ENCODE measurements at regions of chr15 and their contacts with region 1.

Region 1: GRCh38 chr15:64841258-64842095 is at the start of gene PLEKHO2:
- DNase-seq: peak; percentile 75 to 94
- ATAC-seq: peak; percentile 62 to 82 (median 77)
- H3K4me3 ChIP-seq: peak within 1 kb of the TSS; percentile 73
- H3K4me3 Mint-ChIP-seq: peak within 1 kb of the TSS; percentile 83
- H3K27ac ChIP-seq: peak within 1 kb of the TSS; percentile 72
- H3K27ac Mint-ChIP-seq: peak within 1 kb of the TSS; percentile 86 to 89
- H3K4me1 ChIP-seq: peaks cover 69% of the 10 kb centered on the region
- H3K4me1 Mint-ChIP-seq: peaks cover 83 to 91% of the 10 kb centered on the region in 2 donors
- H3K27me3 ChIP-seq: no peaks in the 10 kb centered on the region
- H3K27me3 Mint-ChIP-seq: no peaks in the 10 kb centered on the region
- CTCF ChIP-seq: peak; percentile 22
- total RNA-seq, gene PLEKHO2: 35.3 to 53.4 (median 49.8) TPM

Region 2: GRCh38 chr15:64825431-64826294 is 15.8 kb before region 1 on chr15 and contains the start of gene PIF1:
- intact Hi-C with region 1: loop called (anchors 1 kb)
- DNase-seq: peak; percentile 78 to 97
- ATAC-seq: peak; percentile 90 to 99 (median 93)
- H3K4me3 ChIP-seq: peak within 1 kb of the TSS; percentile 30
- H3K4me3 Mint-ChIP-seq: peak within 1 kb of the TSS; percentile 89
- H3K27ac ChIP-seq: peak within 1 kb of the TSS; percentile 37
- H3K27ac Mint-ChIP-seq: peak within 1 kb of the TSS; percentile 70 to 73
- H3K4me1 ChIP-seq: peaks cover 34% of the 10 kb centered on the region
- H3K4me1 Mint-ChIP-seq: peaks cover 33 to 41% of the 10 kb centered on the region in 2 donors
- H3K27me3 ChIP-seq: no peaks in the 10 kb centered on the region
- H3K27me3 Mint-ChIP-seq: no peaks in the 10 kb centered on the region
- CTCF ChIP-seq: no peak
- total RNA-seq, gene PIF1: 6.2 to 23.9 (median 9.7) TPM

Region 3: GRCh38 chr15:64883997-64884511 is 42.6 kb after region 1 on chr15:
- intact Hi-C with region 1: loop called (anchors 2 kb)
- DNase-seq: peak; percentile 78 to 87
- ATAC-seq: peak; percentile 48 to 66 (median 57)
- H3K4me3 ChIP-seq: no peak overlapping the region
- H3K4me3 Mint-ChIP-seq: peak overlapping the region; percentile 86
- H3K27ac ChIP-seq: peak overlapping the region; percentile 63
- H3K27ac Mint-ChIP-seq: peak overlapping the region; percentile 90 to 99
- H3K4me1 ChIP-seq: peaks cover 36% of the 10 kb centered on the region
- H3K4me1 Mint-ChIP-seq: peaks cover 27 to 31% of the 10 kb centered on the region in 2 donors
- H3K27me3 ChIP-seq: no peaks in the 10 kb centered on the region
- H3K27me3 Mint-ChIP-seq: no peaks in the 10 kb centered on the region
- CTCF ChIP-seq: no peak

Region 4: GRCh38 chr15:64893481-64894394 is 52.3 kb after region 1 on chr15:
- intact Hi-C with region 1: loop called (anchors 1 kb)
- DNase-seq: peak; percentile 82 to 95
- ATAC-seq: peak; percentile 61 to 80 (median 72)
- H3K4me3 ChIP-seq: peak overlapping the region; percentile 23
- H3K4me3 Mint-ChIP-seq: peak overlapping the region; percentile 84
- H3K27ac ChIP-seq: peak overlapping the region; percentile 90
- H3K27ac Mint-ChIP-seq: peak overlapping the region; percentile 98 to 99
- H3K4me1 ChIP-seq: peaks cover 73% of the 10 kb centered on the region
- H3K4me1 Mint-ChIP-seq: peaks cover 66 to 72% of the 10 kb centered on the region in 2 donors
- H3K27me3 ChIP-seq: no peaks in the 10 kb centered on the region
- H3K27me3 Mint-ChIP-seq: no peaks in the 10 kb centered on the region
- CTCF ChIP-seq: no peak

Region 5: DNA sequence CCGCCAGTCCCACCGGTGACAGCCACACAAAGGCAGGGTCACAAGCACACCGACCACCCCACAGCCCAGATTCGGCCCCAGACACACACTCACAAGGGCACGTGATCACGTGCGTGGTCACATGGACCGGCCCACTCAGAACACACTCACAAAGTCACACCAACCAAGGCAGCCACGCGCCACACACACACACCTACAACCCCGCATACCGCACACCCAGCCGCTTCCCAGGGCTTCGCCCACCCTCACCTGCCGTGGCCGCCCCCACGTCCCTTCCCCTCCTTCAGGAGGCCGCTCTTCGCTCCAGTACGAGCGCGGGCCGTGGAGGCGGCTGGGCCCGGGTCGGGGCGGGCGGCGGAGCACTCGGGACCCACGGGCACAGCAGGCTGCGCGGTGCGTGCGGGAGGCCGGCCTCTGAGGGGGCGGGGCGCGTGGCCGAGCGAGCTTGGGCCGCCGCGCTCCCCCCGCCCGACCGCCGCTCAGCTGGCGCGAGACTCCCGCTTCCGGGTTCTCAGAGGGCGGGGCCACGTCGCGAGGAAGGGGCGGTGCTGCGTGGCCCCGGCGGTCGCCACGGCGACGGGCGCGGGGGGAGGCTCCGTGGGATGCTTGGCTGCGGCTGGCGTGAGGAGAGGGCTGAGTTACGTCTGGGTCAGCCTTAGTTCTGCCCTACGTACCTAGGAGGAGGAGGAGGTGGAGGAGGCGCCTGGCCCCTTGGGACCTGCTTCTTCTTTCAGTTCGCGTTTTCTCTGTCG is 148.1 kb after region 1 on chr15 and contains the start of gene SPG21:
- intact Hi-C with region 1: loop called (anchors 5 kb)
- DNase-seq: peak; percentile 93 to 95
- ATAC-seq: peak; percentile 86 to 96 (median 89)
- H3K4me3 ChIP-seq: peak within 1 kb of the TSS; percentile 91
- H3K4me3 Mint-ChIP-seq: peak within 1 kb of the TSS; percentile 99
- H3K27ac ChIP-seq: peak within 1 kb of the TSS; percentile 92
- H3K27ac Mint-ChIP-seq: peak within 1 kb of the TSS; percentile 94 to 96
- H3K4me1 ChIP-seq: peaks cover 20% of the 10 kb centered on the region
- H3K4me1 Mint-ChIP-seq: peaks cover 31 to 34% of the 10 kb centered on the region in 2 donors
- H3K27me3 ChIP-seq: no peaks in the 10 kb centered on the region
- H3K27me3 Mint-ChIP-seq: no peaks in the 10 kb centered on the region
- CTCF ChIP-seq: no peak
- total RNA-seq, gene SPG21: 39.6 to 52.3 (median 40.4) TPM

Measured in natural killer cell (primary cell).